ENCODE measurements at regions of chr3 and their contacts with region 1.

Region 1: DNA sequence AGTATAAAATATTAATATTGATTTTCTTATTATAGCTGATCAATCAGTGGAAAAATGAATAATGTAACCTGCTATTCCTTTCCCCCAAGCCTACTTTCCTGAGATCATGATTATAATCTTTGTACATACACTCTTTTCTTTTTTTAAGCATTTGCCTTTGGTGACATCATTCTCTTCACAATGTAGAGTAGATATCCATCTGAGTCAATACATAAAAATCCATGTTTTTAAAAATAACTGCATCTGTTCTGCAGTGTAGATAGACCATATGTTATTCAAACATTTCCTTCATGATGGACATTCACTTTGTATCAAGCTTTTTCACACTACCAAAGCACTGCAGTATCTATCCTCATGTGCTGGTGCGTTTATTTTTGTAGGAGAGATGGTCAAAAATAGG is 211.1 kb downstream of the PTPRG start:
- DNase-seq: no peak
- H3K4me3 ChIP-seq: no peak overlapping the region
- H3K27ac ChIP-seq: no peak overlapping the region
- H3K4me1 ChIP-seq: peaks cover 0 to 54% (median 22%) of the 10 kb centered on the region in 4 donors
- H3K27me3 ChIP-seq: no peaks in the 10 kb centered on the region
- CTCF ChIP-seq: no peak

Region 2: DNA sequence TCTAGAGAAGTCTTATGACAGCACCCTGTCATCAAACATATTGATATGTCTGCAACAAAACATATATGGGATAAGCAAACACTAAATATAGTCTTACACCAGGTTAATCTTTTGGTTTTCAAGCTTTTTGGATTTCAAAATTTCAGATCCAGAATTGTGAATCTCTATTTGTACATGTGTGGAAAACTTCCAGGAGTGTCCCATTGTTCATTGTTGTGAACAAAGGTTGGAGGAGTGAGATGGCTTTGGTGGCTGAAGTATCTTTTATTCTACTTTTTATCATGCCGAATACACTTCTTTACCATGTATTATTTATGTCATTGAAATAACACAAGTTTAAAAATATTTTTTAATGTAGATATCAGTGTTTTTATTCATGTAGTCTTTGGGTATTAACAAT is 515.3 kb before region 1 on chr3:
- intact Hi-C with region 1: loop called (anchors 5 kb)
- DNase-seq: no peak
- H3K4me3 ChIP-seq: no peak overlapping the region
- H3K27ac ChIP-seq: no peak overlapping the region
- H3K4me1 ChIP-seq: no peaks in the 10 kb centered on the region
- H3K27me3 ChIP-seq: no peaks in the 10 kb centered on the region
- CTCF ChIP-seq: no peak

Region 3: DNA sequence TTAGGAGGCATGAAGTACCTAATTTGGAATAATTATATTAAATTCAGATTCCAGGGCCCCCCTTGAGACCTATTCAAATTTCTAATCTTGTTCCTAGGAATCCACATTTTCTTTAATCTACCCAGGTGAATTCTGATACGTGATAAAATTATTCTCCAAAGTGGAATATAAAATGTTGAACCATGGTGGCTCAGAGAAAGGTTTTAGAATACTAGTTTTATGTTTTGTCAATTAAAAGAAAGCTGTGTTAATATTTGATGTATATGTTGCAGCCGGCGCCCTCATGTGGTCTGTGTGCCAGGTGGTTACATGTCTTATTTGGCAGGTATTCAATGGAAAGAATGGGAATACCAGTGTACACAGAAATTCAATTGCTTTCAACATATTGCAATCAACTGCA is 279.1 kb after region 1 on chr3:
- intact Hi-C with region 1: no loop called
- DNase-seq: no peak
- H3K4me3 ChIP-seq: no peak overlapping the region
- H3K27ac ChIP-seq: no peak overlapping the region
- H3K4me1 ChIP-seq: peaks cover 0 to 10% (median under 1%) of the 10 kb centered on the region in 4 donors
- H3K27me3 ChIP-seq: no peaks in the 10 kb centered on the region
- CTCF ChIP-seq: no peak